ENCODE measurements at regions of chr19 and their contacts with region 1.

Region 1: DNA sequence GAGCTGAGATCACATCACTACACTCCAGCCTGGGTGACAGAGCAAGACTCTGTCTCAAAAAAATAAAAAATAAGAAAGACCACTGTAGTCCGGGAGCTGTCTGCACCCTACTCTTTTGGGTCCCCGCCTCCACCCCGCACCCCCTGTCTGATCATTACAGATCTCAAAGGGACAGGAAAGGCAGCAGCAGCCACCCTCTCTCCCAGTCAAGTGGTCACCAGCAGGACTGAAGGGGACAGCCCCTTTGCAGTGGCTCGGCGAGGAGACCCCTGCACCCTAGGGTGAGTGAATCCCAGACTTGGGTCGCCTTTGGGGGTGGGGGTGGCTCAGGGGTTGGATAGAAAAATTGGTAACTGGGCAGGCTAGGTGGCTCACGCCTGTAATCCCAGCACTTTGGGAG is 12.5 kb upstream of the KCNN1 start:
- DNase-seq: no peak
- ATAC-seq: no peak
- H3K4me3 ChIP-seq: no peak overlapping the region
- H3K27ac ChIP-seq: no peak overlapping the region
- H3K4me1 ChIP-seq: no peaks in the 10 kb centered on the region
- H3K27me3 ChIP-seq: peaks cover 72% of the 10 kb centered on the region
- CTCF ChIP-seq: no peak
- POLR2A ChIP-seq: no peak
- RAD21 ChIP-seq: no peak

Region 2: DNA sequence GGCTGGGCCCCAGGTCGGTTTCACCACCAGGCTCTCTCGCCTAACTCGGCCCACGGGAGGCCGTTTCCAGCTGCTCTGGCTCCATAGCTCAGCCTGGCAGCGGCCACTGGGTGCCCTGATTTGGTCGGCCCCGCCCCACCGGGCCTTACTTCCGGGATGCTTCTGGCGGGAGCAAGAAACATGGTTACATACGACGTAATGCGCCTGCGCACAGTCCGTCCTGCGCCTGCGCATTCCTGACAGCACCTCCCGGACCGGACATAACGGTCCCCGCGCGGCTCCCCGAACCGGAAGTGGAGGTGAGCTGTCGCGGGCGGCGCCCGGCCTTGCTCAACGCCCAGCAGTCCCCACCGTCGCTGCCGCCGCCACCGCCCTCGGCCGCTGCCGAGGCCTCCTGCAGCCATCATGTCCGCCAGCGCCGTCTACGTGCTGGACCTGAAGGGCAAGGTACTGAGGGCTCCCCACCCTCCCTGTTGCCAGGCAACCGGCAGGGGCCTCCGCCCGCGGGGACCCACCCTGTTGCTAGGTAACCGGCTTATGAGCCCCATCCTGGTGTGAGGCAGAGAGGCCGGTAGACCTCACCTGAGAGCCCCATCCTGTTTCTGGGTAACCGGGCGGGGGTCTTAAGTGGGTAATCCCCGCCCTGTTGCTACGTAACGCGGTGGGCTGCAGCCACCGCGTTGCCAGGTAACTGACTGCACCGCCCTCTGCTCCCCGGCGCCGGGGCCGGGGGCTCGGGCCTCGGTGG is 1756.6 kb before region 1 on chr19 and contains the start of gene AP1M1:
- CTCF ChIA-PET with region 1: no interaction called
- POLR2A ChIA-PET with region 1: interaction called, 17 read pairs
- dilution Hi-C with region 1: no loop called
- in situ Hi-C with region 1: no loop called
- intact Hi-C with region 1: no loop called
- DNase-seq: peak; percentile 97
- ATAC-seq: peak; percentile 85
- H3K4me3 ChIP-seq: peak within 1 kb of the TSS; percentile 94
- H3K27ac ChIP-seq: peak within 1 kb of the TSS; percentile 97
- H3K4me1 ChIP-seq: peaks cover 11% of the 10 kb centered on the region
- H3K27me3 ChIP-seq: no peaks in the 10 kb centered on the region
- CTCF ChIP-seq: no peak
- POLR2A ChIP-seq: 0 out of 2 replicates have a peak, but pooled peaks have one; percentile 42
- RAD21 ChIP-seq: no peak
- total RNA-seq, gene AP1M1: 85.1 and 85.8 TPM in 2 replicates